Endothelial cell of umbilical vein (primary cell): ENCODE measurements at regions of chr6 and their contacts with region 1.

Region 1: DNA sequence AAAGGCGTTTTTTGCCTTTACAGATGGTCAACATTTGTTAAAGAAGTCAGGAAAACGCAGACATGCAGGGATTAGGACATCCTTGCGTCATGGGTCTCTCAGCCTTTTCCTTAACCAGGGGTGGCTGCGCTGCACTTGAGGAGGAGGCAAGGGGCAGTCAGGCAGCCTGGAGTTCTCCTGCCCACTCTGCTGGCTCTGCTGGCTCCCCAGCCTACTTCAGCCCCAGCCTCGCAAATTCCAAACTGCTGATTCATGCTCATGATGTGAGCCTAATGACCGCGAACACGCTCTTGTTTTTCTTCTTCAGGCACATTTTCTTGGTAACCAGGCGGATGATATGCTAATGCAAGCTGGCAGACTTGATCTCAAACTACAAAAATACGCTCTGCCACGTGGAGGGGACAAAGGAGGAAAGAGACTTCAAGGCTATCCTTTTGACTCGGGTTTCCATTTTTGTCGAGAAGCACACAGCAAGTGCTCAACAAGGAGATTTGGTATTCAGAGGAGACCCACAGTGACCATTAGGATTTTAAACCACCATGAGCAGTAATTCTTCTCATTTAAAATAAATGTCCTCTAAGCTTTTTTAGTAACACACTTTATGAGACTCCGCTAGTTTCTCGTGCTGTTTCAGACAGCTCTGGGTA is 290.3 kb upstream of the STXBP5 start:
- DNase-seq: peak; percentile 98
- H3K4me3 ChIP-seq: peak overlapping the region in 2 of 3 experiments; percentile 10 to 45
- H3K27ac ChIP-seq: peak overlapping the region; percentile 99
- H3K4me1 ChIP-seq: peaks cover 39% of the 10 kb centered on the region
- H3K27me3 ChIP-seq: no peaks in the 10 kb centered on the region
- CTCF ChIP-seq: no peak
- POLR2A ChIP-seq: no peak

Region 2: DNA sequence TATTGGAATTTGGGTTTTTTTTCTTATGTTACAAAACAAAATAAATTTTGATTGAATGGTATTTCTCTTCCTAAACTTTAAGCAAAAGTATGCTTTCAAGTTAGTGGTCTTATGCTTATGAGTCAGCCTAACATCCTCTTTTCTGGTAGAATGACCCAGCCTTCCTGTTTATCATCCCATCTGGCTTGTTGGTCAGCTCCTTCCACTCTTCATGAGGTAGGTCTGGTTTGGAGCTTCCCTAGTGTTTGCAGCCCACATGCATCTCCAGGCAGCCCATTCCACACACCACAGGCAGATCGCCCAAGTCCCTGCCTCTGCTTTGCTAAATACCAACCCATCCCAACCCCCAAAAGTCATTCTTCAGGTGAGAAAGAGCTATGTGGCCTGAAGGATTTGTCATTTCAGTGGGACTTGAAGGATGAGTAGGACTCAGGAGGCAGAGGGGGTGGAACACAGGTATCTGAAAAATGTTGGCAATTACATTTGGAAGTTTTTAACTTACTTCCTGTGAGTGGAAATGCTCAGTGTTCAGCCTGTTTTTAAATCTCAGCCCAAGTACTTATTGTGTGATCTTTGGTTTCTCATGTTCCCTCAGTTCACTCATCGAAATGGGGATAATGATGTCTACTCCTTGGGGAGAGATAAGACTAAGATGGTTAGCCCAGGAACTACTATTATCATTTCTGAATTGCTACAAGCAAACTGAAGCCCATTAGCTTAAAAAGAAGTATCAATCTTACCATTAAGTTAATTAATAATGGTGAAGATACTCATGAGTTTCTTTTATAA is 21.2 kb before region 1 on chr6:
- CTCF ChIA-PET with region 1: interaction called, 4 read pairs
- POLR2A ChIA-PET with region 1: no interaction called
- dilution Hi-C with region 1: no loop called
- intact Hi-C with region 1: loop called (anchors 1 kb)
- DNase-seq: peak; percentile 82
- H3K4me3 ChIP-seq: no peak overlapping the region
- H3K27ac ChIP-seq: no peak overlapping the region
- H3K4me1 ChIP-seq: peaks cover 11% of the 10 kb centered on the region
- H3K27me3 ChIP-seq: no peaks in the 10 kb centered on the region
- CTCF ChIP-seq: no peak
- POLR2A ChIP-seq: no peak

Region 3: DNA sequence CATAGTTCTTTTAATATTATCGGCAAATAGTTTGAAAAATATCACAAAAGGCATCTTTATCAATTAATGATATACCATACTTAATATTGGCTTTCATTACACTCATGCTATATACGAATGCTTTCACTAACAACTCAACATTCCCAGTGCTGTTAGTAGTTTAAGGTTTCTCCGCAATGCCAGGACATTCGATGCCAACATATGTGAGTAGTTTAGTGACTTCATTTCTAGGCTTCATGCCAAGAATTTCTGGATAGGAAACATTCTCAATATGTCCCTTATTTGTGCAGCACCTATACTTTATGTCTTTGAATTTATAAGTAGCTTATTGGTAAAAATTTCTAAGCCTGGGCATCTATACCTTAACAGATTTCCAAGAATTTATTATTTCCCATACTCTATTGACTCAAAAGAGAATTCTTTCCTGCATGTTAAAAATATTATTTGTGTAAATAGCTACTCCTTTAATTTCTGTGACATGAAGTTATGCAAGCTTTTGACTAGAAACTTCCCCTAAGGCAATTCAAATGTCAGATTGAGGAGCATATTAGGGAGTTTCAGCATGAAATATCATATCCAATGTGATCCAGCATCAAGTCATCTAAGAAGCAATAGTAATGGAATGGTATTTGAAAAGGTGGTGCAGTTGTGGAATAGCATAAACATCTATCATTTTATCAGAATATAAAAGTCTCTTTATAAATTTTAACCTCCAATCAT is 54.2 kb after region 1 on chr6:
- CTCF ChIA-PET with region 1: no interaction called
- POLR2A ChIA-PET with region 1: no interaction called
- dilution Hi-C with region 1: no loop called
- intact Hi-C with region 1: loop called (anchors 2 kb)
- DNase-seq: peak; percentile 72
- H3K4me3 ChIP-seq: no peak overlapping the region
- H3K27ac ChIP-seq: no peak overlapping the region
- H3K4me1 ChIP-seq: no peaks in the 10 kb centered on the region
- H3K27me3 ChIP-seq: peaks cover 3 to 6% of the 10 kb centered on the region in 2 experiments
- CTCF ChIP-seq: no peak
- POLR2A ChIP-seq: no peak

Region 4: DNA sequence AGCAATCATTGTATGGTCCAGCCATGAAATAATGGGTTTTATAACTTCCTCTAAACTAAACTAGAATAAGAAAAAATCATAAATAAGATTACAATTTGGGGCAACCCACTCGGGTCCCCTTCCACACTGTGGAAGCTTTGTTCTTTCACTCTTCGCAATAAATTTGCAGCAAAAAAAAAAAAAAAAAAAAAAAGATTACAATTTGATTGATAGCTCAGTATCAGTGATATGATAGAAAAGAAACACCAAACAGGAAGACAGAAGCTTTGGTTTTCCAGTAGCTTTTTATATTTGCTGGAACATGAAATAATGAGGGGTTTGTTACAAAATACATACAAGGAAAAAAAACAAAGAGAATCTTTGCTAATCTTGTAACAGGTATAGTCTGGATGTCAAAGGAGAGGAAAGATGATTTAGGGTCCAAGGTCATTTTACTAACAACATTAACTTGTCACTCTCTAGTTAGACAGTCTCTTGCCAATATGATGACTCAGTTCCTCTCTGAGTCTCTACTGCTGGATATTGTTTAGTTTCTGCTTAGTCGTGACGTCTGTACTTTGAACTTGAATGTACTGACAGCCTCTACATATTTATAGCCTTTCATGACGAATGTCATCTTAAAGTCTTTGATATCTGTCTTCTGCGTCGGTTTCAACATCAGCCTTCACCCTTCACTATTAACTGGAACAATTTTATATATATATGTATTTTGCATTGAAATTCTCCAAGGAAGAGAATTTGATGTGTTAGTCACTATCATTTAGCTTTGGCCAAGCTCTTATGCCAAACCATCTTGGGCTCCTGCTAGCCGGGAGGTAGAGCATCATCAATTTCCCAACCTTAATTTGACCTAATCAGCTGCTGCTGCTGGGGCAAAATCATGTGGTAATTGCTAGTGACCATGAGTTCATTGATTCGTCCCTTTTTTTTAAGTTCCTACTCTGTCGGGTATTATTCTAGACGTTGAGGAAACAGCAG is 77.1 kb after region 1 on chr6:
- CTCF ChIA-PET with region 1: no interaction called
- POLR2A ChIA-PET with region 1: no interaction called
- dilution Hi-C with region 1: no loop called
- intact Hi-C with region 1: loop called (anchors 1 kb)
- DNase-seq: peak; percentile 62
- H3K4me3 ChIP-seq: no peak overlapping the region
- H3K27ac ChIP-seq: no peak overlapping the region
- H3K4me1 ChIP-seq: peaks cover 6% of the 10 kb centered on the region
- H3K27me3 ChIP-seq: no peaks in the 10 kb centered on the region
- CTCF ChIP-seq: no peak
- POLR2A ChIP-seq: no peak

Region 5: GRCh38 chr6:147166360-147166944 is 252.5 kb after region 1 on chr6:
- CTCF ChIA-PET with region 1: no interaction called
- POLR2A ChIA-PET with region 1: no interaction called
- dilution Hi-C with region 1: no loop called
- intact Hi-C with region 1: loop called (anchors 1 kb)
- DNase-seq: peak; percentile 88
- H3K4me3 ChIP-seq: no peak overlapping the region
- H3K27ac ChIP-seq: peak overlapping the region; percentile 71
- H3K4me1 ChIP-seq: peaks cover 22% of the 10 kb centered on the region
- H3K27me3 ChIP-seq: no peaks in the 10 kb centered on the region
- CTCF ChIP-seq: no peak
- POLR2A ChIP-seq: no peak

Region 6: DNA sequence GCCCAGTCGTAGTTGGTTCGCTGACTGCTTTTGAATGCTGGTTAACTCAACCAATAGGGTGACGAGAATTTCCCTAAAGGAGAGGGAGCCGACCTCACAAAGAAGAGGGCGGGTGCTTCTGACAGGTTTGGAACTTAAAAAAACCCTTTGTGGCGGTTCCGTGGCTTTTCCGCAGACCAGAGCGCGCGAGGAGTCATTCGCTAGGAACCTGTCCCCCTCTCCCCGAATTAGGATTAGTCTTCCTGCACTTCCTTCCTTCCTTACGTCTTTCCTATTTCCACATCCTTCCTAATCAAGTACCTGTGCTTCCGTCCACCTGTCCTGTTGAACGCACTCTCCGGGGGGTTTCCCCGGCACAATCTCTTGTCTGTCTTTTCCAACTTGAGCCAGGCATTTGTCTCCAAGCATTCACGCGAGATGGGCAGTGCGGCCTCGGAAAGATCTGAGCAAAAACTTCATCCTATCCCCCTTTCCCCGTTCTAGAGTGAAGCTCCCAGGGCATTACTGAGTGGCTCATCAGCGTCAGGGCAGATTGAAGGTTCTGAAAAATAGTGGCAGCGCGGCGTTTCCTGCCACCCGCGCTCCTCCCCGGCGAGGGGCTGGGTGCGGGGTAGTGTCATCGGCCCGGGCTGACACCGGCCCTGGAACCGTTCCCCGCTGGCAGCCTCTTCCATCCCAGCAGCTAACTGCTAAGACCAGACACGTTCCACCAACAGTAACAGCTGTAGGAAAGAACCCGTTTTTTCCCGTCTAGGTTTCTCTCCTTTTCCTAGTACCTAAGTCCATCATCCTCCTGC is 288.7 kb after region 1 on chr6:
- CTCF ChIA-PET with region 1: no interaction called
- POLR2A ChIA-PET with region 1: no interaction called
- dilution Hi-C with region 1: no loop called
- intact Hi-C with region 1: loop called (anchors 1 kb)
- DNase-seq: peak; percentile 95
- H3K4me3 ChIP-seq: peak overlapping the region; percentile 58 to 92 (median 89)
- H3K27ac ChIP-seq: peak overlapping the region; percentile 86
- H3K4me1 ChIP-seq: peaks cover 20% of the 10 kb centered on the region
- H3K27me3 ChIP-seq: no peaks in the 10 kb centered on the region
- CTCF ChIP-seq: no peak
- POLR2A ChIP-seq: peak; percentile 61

Region 7: DNA sequence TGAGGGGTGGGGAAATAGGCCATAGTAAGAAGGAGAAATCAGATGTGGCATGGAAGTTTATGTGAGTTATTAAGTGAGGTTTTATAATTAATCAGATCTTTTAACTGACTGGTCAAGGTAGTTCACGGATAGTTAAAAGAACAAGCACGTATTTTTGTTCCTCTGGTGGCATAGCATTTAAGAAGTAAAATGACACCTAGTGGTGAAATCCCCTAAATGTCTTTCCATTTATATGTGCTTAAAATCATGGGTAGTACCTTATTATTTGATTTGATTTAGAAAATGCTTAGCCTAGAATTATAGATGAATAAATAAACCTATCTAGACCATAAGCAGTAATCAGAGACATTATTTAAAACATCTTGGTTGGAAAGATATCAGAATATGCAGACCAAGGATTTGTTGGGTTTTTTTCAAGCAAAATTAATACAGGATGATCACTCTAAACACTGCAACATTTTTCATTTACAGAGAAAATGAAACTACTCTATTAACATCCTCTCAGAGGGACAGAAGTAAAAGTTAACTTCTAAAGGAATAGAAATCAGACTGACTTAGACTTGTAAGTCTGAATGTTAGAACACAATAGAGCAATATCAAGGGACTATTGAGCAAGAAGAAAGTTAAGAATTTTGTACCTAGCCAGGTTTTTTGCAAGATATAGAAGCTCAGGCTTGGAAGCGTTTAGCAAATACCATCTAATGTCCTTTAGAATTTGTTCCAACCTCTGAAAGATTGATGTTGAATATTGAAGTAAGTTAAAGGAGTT is 371.3 kb after region 1 on chr6:
- CTCF ChIA-PET with region 1: no interaction called
- POLR2A ChIA-PET with region 1: no interaction called
- dilution Hi-C with region 1: no loop called
- intact Hi-C with region 1: loop called (anchors 2 kb)
- DNase-seq: peak; percentile 62
- H3K4me3 ChIP-seq: no peak overlapping the region
- H3K27ac ChIP-seq: no peak overlapping the region
- H3K4me1 ChIP-seq: peaks cover 12% of the 10 kb centered on the region
- H3K27me3 ChIP-seq: no peaks in the 10 kb centered on the region
- CTCF ChIP-seq: peak; percentile 26 to 27
- POLR2A ChIP-seq: no peak